K562 (cell line): ENCODE measurements at regions of chr10 and their contacts with region 1.

Region 1: DNA sequence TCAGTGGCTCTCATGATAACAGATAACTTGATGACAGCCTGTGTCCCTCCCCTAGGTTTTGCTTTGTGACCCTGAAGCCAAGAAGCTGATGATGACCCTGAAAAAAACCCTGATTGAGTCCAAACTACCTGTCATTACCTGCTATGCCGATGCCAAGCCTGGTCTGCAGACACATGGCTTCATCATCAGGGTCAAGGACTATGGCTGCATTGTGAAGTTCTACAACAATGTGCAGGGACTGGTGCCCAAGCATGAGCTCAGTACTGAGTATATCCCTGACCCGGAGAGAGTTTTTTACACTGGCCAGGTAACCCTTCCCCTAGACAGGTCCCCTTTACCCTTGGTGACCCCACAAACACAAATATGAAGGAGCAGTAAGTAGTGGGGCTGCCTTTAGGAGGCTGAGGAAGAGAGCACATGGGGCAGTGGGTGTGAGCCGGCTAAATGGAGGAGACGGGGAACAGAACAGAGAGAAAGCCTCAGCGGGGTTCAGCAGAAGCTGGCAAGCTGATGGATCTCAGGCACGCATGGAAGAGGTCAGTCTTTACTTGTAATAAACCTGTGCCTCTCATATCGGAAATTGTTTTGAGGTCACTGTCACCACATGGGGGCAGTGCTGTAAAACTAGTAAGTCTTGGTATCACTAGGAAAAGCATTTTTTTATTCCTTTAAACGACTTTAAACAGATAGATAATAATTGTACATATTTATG is 20.2 kb downstream of the PDCD11 start:
- DNase-seq: peak in 3 of 4 experiments; percentile 20 to 59 (median 33)
- ATAC-seq: peak; percentile 68
- H3K4me3 ChIP-seq: no peak overlapping the region
- H3K27ac ChIP-seq: no peak overlapping the region
- H3K4me1 ChIP-seq: no peaks in the 10 kb centered on the region
- H3K27me3 ChIP-seq: no peaks in the 10 kb centered on the region
- CTCF ChIP-seq: peak in 2 of 3 experiments; percentile 44 to 63; a peak in 5 of 6 replicates
- EP300 ChIP-seq: no peak
- POLR2A ChIP-seq: no peak
- RAD21 ChIP-seq: peak; percentile 47 to 60

Region 2: DNA sequence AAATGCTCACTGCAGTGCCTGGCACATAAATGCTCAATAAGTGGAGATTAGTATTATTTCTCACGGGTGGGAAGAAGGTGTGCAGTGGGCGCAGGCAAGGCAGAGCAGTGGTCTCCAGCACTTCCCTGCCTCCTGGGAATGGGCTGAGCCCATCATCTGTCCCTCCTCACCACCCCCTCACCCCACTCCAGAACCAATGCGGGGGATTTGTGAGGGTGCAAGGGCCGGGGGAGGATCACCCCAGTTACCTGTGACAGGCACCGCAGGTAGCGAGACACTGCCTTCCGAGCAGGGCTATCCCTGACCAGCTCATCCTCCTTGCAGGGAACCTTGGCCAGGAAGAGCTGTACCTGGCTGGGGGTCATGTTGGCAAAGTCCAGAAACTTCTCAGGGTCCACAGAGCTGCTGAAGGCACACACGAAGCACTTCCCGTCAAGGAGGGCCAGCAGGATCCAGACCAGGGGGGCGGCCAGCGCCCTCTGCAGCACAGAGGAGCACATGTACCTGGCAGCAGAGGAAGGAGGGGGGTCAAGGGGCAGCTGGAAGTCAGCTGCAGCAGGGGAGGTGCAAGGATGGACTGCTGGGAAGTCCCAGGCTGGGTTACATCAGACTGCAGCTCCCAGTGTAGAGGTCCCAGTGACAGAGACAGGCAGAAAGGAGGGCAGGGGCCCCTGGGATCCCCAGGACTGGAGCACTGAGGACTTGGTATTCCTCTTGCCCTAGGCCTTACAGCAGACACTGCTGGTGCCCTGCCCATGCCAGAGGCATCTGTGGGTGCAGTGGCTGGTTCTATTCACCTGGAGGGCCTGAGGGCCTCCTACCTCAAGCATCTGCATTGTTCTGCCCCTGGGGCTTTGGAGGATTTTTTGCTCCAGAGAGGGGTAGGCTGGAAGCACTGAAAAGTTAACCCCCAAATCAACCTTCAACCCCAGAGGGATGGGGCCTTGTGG is 59.7 kb after region 1 on chr10:
- CTCF ChIA-PET with region 1: no interaction called
- POLR2A ChIA-PET with region 1: no interaction called
- in situ Hi-C with region 1: loop called (anchors 5 kb)
- intact Hi-C with region 1: no loop called
- DNase-seq: peak; percentile 36 to 52 (median 44)
- ATAC-seq: peak; percentile 91
- H3K4me3 ChIP-seq: no peak overlapping the region
- H3K27ac ChIP-seq: no peak overlapping the region
- H3K4me1 ChIP-seq: peaks cover 6 to 22% of the 10 kb centered on the region in 2 experiments; a peak in 3 of 5 replicates
- H3K27me3 ChIP-seq: no peaks in the 10 kb centered on the region
- CTCF ChIP-seq: peak; percentile 52
- EP300 ChIP-seq: no peak
- POLR2A ChIP-seq: no peak
- RAD21 ChIP-seq: peak in 1 of 2 experiments; percentile 47; a peak in 2 of 4 replicates

Region 3: DNA sequence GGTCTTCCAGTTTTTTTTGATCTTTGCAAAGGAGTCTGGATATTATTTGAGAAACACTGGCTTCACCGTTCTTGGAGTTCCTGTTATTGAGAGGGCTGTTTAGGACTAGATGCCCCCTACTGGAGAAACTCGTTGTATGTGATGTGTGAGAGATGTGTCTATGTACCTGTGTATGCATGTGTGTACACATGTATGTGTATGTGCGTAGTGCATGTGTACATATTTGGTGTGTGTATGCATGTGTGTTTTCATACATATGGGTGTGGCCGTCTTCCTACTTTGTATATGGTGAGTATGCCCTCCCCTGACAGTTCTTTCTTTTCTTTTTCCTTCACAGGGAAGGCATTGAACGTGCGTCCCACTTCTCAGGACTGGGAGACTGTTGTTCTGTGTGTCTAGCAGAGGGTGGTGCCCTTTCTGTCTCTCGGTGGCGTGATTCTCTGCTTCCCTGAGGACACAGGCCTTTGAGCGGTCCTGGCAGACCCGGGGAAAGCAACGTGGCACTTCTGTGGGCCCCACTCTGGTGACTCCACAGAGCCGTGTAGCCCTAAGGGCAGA is 65.5 kb after region 1 on chr10:
- CTCF ChIA-PET with region 1: interaction called, 26 read pairs
- POLR2A ChIA-PET with region 1: no interaction called
- in situ Hi-C with region 1: loop called (anchors 5 kb)
- intact Hi-C with region 1: loop called (anchors 2 kb)
- DNase-seq: peak; percentile 51 to 73 (median 57)
- ATAC-seq: peak; percentile 88
- H3K4me3 ChIP-seq: no peak overlapping the region
- H3K27ac ChIP-seq: no peak overlapping the region
- H3K4me1 ChIP-seq: peaks cover 0 to 10% of the 10 kb centered on the region in 2 experiments; a peak in 2 of 5 replicates
- H3K27me3 ChIP-seq: 0 out of 5 replicates have a peak, but pooled peaks cover 0 to 3% of the 10 kb centered on the region in 2 experiments
- CTCF ChIP-seq: peak; percentile 33 to 59 (median 53); a peak in 4 of 6 replicates
- EP300 ChIP-seq: no peak
- POLR2A ChIP-seq: no peak
- RAD21 ChIP-seq: peak; percentile 41 to 62; a peak in 3 of 4 replicates

Region 4: GRCh38 chr10:103564776-103565520 is 148.4 kb after region 1 on chr10:
- CTCF ChIA-PET with region 1: no interaction called
- POLR2A ChIA-PET with region 1: no interaction called
- in situ Hi-C with region 1: no loop called
- intact Hi-C with region 1: loop called (anchors 10 kb)
- DNase-seq: peak; percentile 62 to 70 (median 64)
- ATAC-seq: peak; percentile 96
- H3K4me3 ChIP-seq: no peak overlapping the region
- H3K27ac ChIP-seq: no peak overlapping the region
- H3K4me1 ChIP-seq: peaks cover 0 to 10% of the 10 kb centered on the region in 2 experiments; a peak in 1 of 5 replicates
- H3K27me3 ChIP-seq: peaks cover 0 to 7% of the 10 kb centered on the region in 2 experiments; a peak in 2 of 5 replicates
- CTCF ChIP-seq: peak; percentile 65 to 84 (median 68)
- EP300 ChIP-seq: no peak
- POLR2A ChIP-seq: no peak
- RAD21 ChIP-seq: peak in 1 of 2 experiments; percentile 54; a peak in 2 of 4 replicates

Region 5: GRCh38 chr10:103592186-103593021 is 175.8 kb after region 1 on chr10:
- CTCF ChIA-PET with region 1: interaction called, 11 read pairs
- POLR2A ChIA-PET with region 1: no interaction called
- in situ Hi-C with region 1: no loop called
- intact Hi-C with region 1: loop called (anchors 2 kb)
- DNase-seq: peak; percentile 61 to 80 (median 80)
- ATAC-seq: peak; percentile 97
- H3K4me3 ChIP-seq: no peak overlapping the region
- H3K27ac ChIP-seq: no peak overlapping the region
- H3K4me1 ChIP-seq: no peaks in the 10 kb centered on the region; a peak in 2 of 5 replicates
- H3K27me3 ChIP-seq: no peaks in the 10 kb centered on the region
- CTCF ChIP-seq: peak; percentile 70 to 77 (median 75)
- EP300 ChIP-seq: no peak
- POLR2A ChIP-seq: no peak
- RAD21 ChIP-seq: peak; percentile 39 to 70; a peak in 3 of 4 replicates